Ascending aorta (tissue), 2 donors: ENCODE measurements at regions of chr5 and their contacts with region 1.

Region 1: GRCh38 chr5:120055858-120056257 is 408.2 kb upstream of the PRR16 start:
- DNase-seq: no peak
- H3K4me3 ChIP-seq: no peak overlapping the region
- H3K27ac ChIP-seq: peak overlapping the region; percentile 69 to 84
- H3K4me1 ChIP-seq: peaks cover 0 to 20% of the 10 kb centered on the region in 2 donors
- H3K27me3 ChIP-seq: no peaks in the 10 kb centered on the region
- CTCF ChIP-seq: peak in 1 of 3 experiments; percentile 46

Region 2: DNA sequence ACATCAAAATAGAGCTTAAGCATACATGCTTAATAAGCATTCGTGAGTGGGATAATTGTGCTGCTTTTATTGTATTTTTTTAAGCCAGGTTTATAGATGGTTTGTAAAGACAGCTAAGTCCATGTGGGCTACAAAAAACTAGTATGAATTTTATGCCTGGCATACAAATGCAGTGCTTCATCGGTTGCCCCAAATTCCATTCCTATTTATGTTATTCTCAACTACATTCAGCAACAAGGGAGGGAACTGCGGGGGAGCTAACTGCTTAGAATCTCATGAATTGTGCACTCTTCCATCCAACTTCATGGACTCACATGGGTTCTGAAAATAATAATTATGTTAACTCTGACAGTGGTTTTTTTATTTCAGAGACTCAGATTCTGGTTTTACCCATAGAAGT is 227.3 kb before region 1 on chr5:
- intact Hi-C with region 1: loop called (anchors 10 kb)
- DNase-seq: no peak
- H3K4me3 ChIP-seq: peak overlapping the region in 1 of 2 donors; percentile 19
- H3K27ac ChIP-seq: peak overlapping the region; percentile 58 to 69
- H3K4me1 ChIP-seq: peaks cover 6 to 28% of the 10 kb centered on the region in 2 donors
- H3K27me3 ChIP-seq: no peaks in the 10 kb centered on the region
- CTCF ChIP-seq: no peak

Region 3: DNA sequence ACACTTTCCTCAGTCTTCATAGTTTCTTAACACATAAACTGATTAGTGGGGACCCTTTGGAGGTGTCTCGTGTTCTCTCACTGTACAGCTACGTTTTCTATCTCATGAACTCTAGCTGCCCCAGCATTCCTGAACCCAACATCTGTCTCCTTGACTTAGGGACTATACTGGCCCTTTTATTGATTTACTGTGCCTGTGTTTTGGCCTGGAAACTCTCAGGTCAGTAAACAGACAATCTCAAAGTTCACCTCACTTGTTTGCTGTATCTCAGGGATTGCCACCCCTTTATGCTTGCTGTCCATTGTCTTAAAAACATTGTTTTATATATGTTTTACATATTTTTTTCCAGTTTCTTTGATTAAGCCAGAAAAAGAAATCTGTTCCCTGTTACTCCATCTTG is 203.7 kb before region 1 on chr5:
- intact Hi-C with region 1: no loop called
- DNase-seq: no peak
- H3K4me3 ChIP-seq: no peak overlapping the region
- H3K27ac ChIP-seq: no peak overlapping the region
- H3K4me1 ChIP-seq: no peaks in the 10 kb centered on the region
- H3K27me3 ChIP-seq: no peaks in the 10 kb centered on the region
- CTCF ChIP-seq: no peak

Region 4: DNA sequence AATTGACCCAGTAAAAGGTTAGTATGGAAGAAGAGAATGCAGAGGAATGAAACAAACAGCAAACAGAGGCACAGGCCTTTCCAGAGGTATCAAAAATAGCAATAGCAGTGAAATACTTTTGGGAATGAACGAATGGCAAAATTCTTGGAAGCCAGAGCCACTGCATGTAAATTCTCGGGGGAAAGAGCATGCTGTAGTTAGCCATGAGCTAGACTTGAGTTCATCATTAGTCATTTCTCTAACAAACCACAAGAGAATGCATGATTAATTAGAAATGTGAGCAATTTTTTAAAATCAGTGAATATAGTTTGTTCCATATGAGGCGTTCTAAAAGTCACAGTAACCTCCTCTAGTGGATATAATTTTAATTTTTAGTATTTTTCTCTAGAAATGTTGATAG is 237.9 kb after region 1 on chr5:
- intact Hi-C with region 1: loop called (anchors 10 kb)
- DNase-seq: no peak
- H3K4me3 ChIP-seq: no peak overlapping the region
- H3K27ac ChIP-seq: no peak overlapping the region
- H3K4me1 ChIP-seq: no peaks in the 10 kb centered on the region
- H3K27me3 ChIP-seq: no peaks in the 10 kb centered on the region
- CTCF ChIP-seq: no peak

Region 5: DNA sequence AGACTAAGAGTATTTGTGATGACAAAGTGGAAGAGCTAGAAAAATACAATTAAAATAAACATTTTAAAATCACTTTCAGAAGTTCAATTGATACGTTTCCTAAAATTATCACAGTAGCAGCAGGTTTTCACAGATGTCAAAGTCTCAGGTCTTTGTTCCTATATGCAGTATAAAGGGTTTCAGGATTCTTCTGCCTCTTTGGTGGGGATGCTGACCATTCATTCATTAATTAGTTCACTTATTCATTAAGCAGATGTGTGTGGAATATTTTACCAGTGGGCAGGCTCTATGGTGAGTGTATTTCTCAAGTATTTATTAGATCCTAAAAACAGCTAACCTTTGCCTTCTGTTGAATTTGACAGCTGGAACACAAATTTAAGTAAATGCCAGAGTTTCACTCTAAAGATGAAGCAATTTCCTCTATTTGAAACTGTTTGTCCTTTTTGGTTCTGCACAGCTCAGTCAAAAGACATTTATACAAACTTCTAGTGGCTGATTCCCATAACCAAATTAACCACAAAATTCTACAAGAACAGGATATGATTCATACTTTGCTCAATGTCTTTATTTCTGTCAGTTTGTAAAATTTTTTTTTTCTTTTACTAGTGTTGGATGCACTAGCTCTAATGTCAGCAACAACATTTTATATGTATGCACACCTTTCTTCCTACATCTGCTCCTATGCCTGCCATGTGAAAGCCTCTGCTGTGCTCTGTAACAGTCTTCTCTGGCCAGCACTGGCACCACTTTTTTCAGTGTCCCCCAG is 332.3 kb after region 1 on chr5:
- intact Hi-C with region 1: loop called (anchors 5 kb)
- DNase-seq: no peak
- H3K4me3 ChIP-seq: no peak overlapping the region
- H3K27ac ChIP-seq: peak overlapping the region; percentile 68 to 82
- H3K4me1 ChIP-seq: peaks cover 3 to 12% of the 10 kb centered on the region in 2 donors
- H3K27me3 ChIP-seq: no peaks in the 10 kb centered on the region
- CTCF ChIP-seq: no peak

Region 6: GRCh38 chr5:120604888-120605287 is 549.0 kb after region 1 on chr5:
- intact Hi-C with region 1: loop called (anchors 10 kb)
- DNase-seq: no peak
- H3K4me3 ChIP-seq: no peak overlapping the region
- H3K27ac ChIP-seq: no peak overlapping the region
- H3K4me1 ChIP-seq: peaks cover 0 to 3% of the 10 kb centered on the region in 2 donors
- H3K27me3 ChIP-seq: no peaks in the 10 kb centered on the region
- CTCF ChIP-seq: no peak